Dorsolateral prefrontal cortex (tissue), 120 donors: ENCODE measurements at regions of chr3 and their contacts with region 1.

Region 1: DNA sequence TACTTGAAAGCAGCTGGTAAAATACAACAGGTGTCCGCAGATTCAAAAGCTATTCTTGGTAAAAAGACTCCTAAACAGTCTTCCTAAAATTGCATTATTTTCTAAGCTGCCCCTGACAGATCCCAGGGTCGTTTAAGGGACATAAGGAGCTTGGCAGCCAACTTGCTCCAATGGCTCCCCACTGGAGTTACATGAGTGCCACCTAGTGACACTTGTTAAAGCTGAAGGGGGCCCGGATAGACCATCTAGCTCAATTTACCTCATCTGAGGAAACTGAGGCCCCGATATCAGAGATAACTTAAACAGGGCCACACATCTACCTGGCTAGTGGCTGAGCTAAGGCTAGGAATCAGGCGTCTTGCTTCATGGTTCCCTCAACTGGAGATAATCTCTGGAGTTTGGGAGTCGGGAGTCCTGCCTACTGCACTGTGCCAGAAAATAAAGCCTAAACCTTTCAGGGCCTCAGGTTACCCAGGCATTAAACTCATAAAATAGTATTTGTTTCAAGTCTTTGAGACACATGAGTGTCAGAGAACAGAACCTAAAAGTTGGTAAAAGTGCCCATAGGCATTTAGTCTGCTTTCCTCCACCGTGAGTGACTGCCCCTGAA is 6.5 kb upstream of the TBC1D23 start:
- DNase-seq: peak in 7 of 10 donors; percentile 16 to 71 (median 45)
- H3K4me3 ChIP-seq: no peak overlapping the region
- H3K27ac ChIP-seq: no peak overlapping the region
- H3K27me3 ChIP-seq: no peaks in the 10 kb centered on the region
- CTCF ChIP-seq: peak; percentile 29 to 87 (median 69)

Region 2: GRCh38 chr3:99833617-99834205 is 420.6 kb before region 1 on chr3:
- intact Hi-C with region 1: loop called (anchors 2 to 5 kb)
- DNase-seq: no peak
- H3K4me3 ChIP-seq: no peak overlapping the region
- H3K27ac ChIP-seq: no peak overlapping the region
- H3K27me3 ChIP-seq: no peaks in the 10 kb centered on the region
- CTCF ChIP-seq: no peak

Region 3: DNA sequence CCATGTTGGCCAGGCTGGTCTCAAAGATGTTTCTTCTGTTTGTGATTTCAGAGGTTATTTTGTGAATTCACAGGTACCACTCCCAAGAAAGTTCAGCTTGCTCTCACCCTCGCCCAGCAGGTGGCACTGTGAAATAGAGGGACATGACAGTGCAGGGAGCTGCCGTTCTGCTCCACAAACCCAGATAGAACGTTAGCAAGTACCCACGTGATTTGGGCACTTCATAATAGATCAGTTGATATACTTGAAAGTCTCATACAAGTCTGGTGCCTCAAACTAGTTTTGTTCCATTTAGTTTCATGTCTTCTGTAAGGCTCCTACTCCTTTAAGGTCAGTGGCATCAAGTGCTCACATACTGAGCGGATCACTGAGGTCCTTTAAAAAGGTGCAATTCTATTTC is 185.4 kb before region 1 on chr3:
- intact Hi-C with region 1: loop called (anchors 5 kb)
- DNase-seq: peak in 9 of 10 donors; percentile 24 to 66 (median 58)
- H3K4me3 ChIP-seq: no peak overlapping the region
- H3K27ac ChIP-seq: no peak overlapping the region
- H3K27me3 ChIP-seq: no peaks in the 10 kb centered on the region
- CTCF ChIP-seq: peak; percentile 25 to 76 (median 65)

Region 4: GRCh38 chr3:100454677-100455076 is 200.4 kb after region 1 on chr3:
- intact Hi-C with region 1: no loop called
- DNase-seq: no peak
- H3K4me3 ChIP-seq: no peak overlapping the region
- H3K27ac ChIP-seq: no peak overlapping the region
- H3K27me3 ChIP-seq: no peaks in the 10 kb centered on the region
- CTCF ChIP-seq: no peak

Region 5: GRCh38 chr3:100521439-100521845 is 267.2 kb after region 1 on chr3:
- intact Hi-C with region 1: no loop called
- DNase-seq: no peak
- H3K4me3 ChIP-seq: no peak overlapping the region
- H3K27ac ChIP-seq: no peak overlapping the region
- H3K27me3 ChIP-seq: no peaks in the 10 kb centered on the region
- CTCF ChIP-seq: no peak